T-cell (primary cell): ENCODE measurements at regions of chr4 and their contacts with region 1.

Region 1: DNA sequence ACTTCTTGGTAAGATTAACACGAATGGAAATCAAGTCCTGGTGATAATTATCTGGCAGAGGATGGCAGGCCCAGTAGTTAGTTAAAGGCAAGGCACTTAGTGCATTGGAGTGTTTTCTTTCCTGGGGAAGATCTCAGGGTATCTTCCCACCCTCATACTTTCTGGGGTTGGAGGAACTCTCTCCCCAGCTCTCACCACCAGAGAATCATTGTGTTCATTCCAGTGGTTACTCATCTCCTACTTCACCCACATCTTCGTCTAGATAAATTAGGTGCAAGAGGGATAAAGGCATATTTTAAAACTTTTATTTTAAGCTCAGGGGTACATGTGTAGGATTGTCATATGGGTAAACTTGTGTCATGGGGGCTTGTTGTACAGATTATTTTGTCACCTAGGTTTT is 67.5 kb upstream of the SH3RF1 start:
- DNase-seq: no peak
- ATAC-seq: no peak
- H3K4me3 ChIP-seq: no peak overlapping the region
- H3K4me3 Mint-ChIP-seq: no peak overlapping the region
- H3K27ac ChIP-seq: no peak overlapping the region
- H3K27ac Mint-ChIP-seq: no peak overlapping the region
- H3K4me1 ChIP-seq: no peaks in the 10 kb centered on the region
- H3K4me1 Mint-ChIP-seq: no peaks in the 10 kb centered on the region
- H3K27me3 ChIP-seq: no peaks in the 10 kb centered on the region
- H3K27me3 Mint-ChIP-seq: peaks cover 3 to 5% of the 10 kb centered on the region in 2 donors

Region 2: GRCh38 chr4:169133932-169134331 is 204.3 kb before region 1 on chr4:
- CTCF ChIA-PET with region 1: no interaction called
- POLR2A ChIA-PET with region 1: no interaction called
- DNase-seq: no peak
- ATAC-seq: no peak
- H3K4me3 ChIP-seq: no peak overlapping the region
- H3K4me3 Mint-ChIP-seq: no peak overlapping the region
- H3K27ac ChIP-seq: no peak overlapping the region
- H3K27ac Mint-ChIP-seq: no peak overlapping the region
- H3K4me1 ChIP-seq: no peaks in the 10 kb centered on the region
- H3K4me1 Mint-ChIP-seq: no peaks in the 10 kb centered on the region
- H3K27me3 ChIP-seq: no peaks in the 10 kb centered on the region
- H3K27me3 Mint-ChIP-seq: peaks cover 6 to 14% of the 10 kb centered on the region in 2 donors

Region 3: GRCh38 chr4:169311643-169312365 is 26.4 kb before region 1 on chr4:
- CTCF ChIA-PET with region 1: no interaction called
- POLR2A ChIA-PET with region 1: no interaction called
- DNase-seq: no peak
- ATAC-seq: no peak
- H3K4me3 ChIP-seq: no peak overlapping the region
- H3K4me3 Mint-ChIP-seq: no peak overlapping the region
- H3K27ac ChIP-seq: no peak overlapping the region
- H3K27ac Mint-ChIP-seq: no peak overlapping the region
- H3K4me1 ChIP-seq: no peaks in the 10 kb centered on the region
- H3K4me1 Mint-ChIP-seq: no peaks in the 10 kb centered on the region
- H3K27me3 ChIP-seq: peaks cover 0 to 6% of the 10 kb centered on the region in 2 experiments
- H3K27me3 Mint-ChIP-seq: peaks cover 14 to 15% of the 10 kb centered on the region in 2 donors

Region 4: DNA sequence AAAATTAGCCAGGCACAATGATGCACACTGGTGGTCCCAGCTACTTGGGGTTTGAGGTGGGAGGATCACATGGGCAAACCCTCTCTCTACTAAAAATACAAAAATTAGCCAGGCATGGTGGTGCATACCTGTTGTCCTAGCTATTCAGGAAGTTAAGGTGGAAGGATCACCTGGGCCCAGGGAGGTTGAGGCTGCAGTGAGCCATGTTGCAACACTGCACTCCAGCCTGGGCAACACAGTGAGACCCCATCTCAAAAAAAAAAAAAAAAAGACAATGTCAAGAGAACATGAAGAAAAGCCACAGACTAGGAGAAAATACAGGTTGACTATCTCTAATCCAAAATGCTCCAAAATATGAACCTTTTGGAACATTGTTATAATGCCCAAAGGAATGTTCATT is 120.3 kb after region 1 on chr4:
- CTCF ChIA-PET with region 1: interaction called in 1 of 2 experiments, 10 read pairs
- POLR2A ChIA-PET with region 1: no interaction called
- DNase-seq: no peak
- ATAC-seq: no peak
- H3K4me3 ChIP-seq: no peak overlapping the region
- H3K4me3 Mint-ChIP-seq: no peak overlapping the region
- H3K27ac ChIP-seq: no peak overlapping the region
- H3K27ac Mint-ChIP-seq: no peak overlapping the region
- H3K4me1 ChIP-seq: no peaks in the 10 kb centered on the region
- H3K4me1 Mint-ChIP-seq: peaks cover 0 to 3% (median 0%) of the 10 kb centered on the region in 3 donors
- H3K27me3 ChIP-seq: no peaks in the 10 kb centered on the region
- H3K27me3 Mint-ChIP-seq: no peaks in the 10 kb centered on the region

Region 5: DNA sequence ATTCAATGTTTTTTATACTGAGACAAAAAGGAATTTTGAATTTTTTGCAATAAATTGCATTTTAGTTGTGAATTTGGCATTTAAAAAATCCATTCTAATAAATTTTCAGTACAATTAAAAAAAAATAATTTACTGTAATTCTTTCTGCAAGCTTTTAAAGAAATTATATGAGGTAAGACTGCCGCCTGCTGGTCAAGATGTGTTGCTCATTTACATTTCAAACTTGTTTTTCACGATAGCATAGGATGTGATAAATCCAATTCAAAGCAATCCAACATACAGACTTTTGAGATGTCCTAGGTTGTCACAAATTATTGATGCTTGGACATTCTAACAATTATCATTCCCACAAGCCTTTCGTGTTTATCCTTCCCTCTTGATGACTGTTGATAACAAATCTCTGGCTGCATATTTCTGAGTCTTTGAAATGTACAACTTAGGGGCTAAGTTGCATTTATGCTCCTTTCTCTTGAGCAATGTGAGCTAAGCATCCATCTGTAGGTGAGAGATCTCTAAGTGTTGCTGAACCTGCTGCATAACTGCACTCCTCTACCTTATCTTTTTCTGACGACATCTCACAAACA is 709.6 kb after region 1 on chr4:
- CTCF ChIA-PET with region 1: no interaction called
- POLR2A ChIA-PET with region 1: no interaction called
- DNase-seq: peak in 30 of 35 experiments; percentile 11 to 78 (median 46)
- ATAC-seq: no peak
- H3K4me3 ChIP-seq: no peak overlapping the region
- H3K4me3 Mint-ChIP-seq: no peak overlapping the region
- H3K27ac ChIP-seq: no peak overlapping the region
- H3K27ac Mint-ChIP-seq: no peak overlapping the region
- H3K4me1 ChIP-seq: no peaks in the 10 kb centered on the region
- H3K4me1 Mint-ChIP-seq: no peaks in the 10 kb centered on the region
- H3K27me3 ChIP-seq: no peaks in the 10 kb centered on the region
- H3K27me3 Mint-ChIP-seq: no peaks in the 10 kb centered on the region